ENCODE measurements at regions of chr11 and their contacts with region 1.

Region 1: GRCh38 chr11:78416305-78417178 is 1.1 kb downstream of the GAB2 start:
- DNase-seq: peak; percentile 71
- ATAC-seq: peak; percentile 51
- H3K4me3 Mint-ChIP-seq: peak overlapping the region; percentile 98
- H3K27ac Mint-ChIP-seq: peak overlapping the region; percentile 96
- H3K4me1 Mint-ChIP-seq: peaks cover 79% of the 10 kb centered on the region
- H3K27me3 Mint-ChIP-seq: no peaks in the 10 kb centered on the region
- CTCF ChIP-seq: no peak

Region 2: GRCh38 chr11:77994412-77995362 is 421.9 kb before region 1 on chr11 and contains the start of gene INTS4:
- CTCF ChIA-PET with region 1: no interaction called
- POLR2A ChIA-PET with region 1: interaction called, 4 read pairs
- intact Hi-C with region 1: loop called (anchors 2 kb)
- DNase-seq: peak; percentile 90
- ATAC-seq: peak; percentile 96
- H3K4me3 Mint-ChIP-seq: peak within 1 kb of the TSS; percentile 94
- H3K27ac Mint-ChIP-seq: peak within 1 kb of the TSS; percentile 97
- H3K4me1 Mint-ChIP-seq: peaks cover 45% of the 10 kb centered on the region
- H3K27me3 Mint-ChIP-seq: no peaks in the 10 kb centered on the region
- CTCF ChIP-seq: no peak
- total RNA-seq, gene INTS4: 61.8 and 62.3 TPM in 2 replicates

Region 3: GRCh38 chr11:78188286-78189173 is 228.0 kb before region 1 on chr11 and contains the starts of genes KCTD21 and USP35:
- CTCF ChIA-PET with region 1: no interaction called
- POLR2A ChIA-PET with region 1: interaction called, 11 read pairs
- intact Hi-C with region 1: loop called (anchors 2 kb)
- DNase-seq: peak; percentile 92
- ATAC-seq: peak; percentile 95
- H3K4me3 Mint-ChIP-seq: peak within 1 kb of the TSS; percentile 95
- H3K27ac Mint-ChIP-seq: peak within 1 kb of the TSS; percentile 87
- H3K4me1 Mint-ChIP-seq: peaks cover 36% of the 10 kb centered on the region
- H3K27me3 Mint-ChIP-seq: no peaks in the 10 kb centered on the region
- CTCF ChIP-seq: no peak
- total RNA-seq, gene KCTD21: 3.2 and 3.5 TPM in 2 replicates
- total RNA-seq, gene USP35: 3.5 and 4.9 TPM in 2 replicates

Region 4: DNA sequence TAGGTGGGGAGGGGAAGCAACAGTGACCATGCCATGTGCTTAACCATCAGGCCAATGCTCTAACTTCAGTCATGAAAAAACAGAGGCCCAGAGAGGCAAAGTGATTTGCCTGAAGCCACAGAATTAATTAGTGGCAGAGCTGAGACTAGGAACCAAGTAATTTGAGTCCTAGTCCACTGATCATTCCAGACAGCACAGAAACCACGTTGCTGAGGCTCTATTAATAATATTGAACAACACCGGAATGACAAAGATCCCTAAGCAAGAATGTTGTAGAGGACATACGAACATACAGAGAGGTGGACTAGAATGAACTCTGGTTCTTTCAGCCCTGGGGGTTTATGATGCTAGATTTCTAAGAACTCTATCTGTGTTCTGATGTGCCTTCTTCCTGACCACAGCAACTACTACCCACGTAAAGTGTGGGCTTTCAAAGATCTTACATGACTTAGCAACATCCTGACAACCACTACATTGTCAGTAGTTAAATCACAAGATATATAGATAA is 91.2 kb before region 1 on chr11:
- CTCF ChIA-PET with region 1: interaction called, 3 read pairs
- POLR2A ChIA-PET with region 1: interaction called, 14 read pairs
- intact Hi-C with region 1: no loop called
- DNase-seq: no peak
- ATAC-seq: peak; percentile 62
- H3K4me3 Mint-ChIP-seq: no peak overlapping the region
- H3K27ac Mint-ChIP-seq: peak overlapping the region; percentile 8
- H3K4me1 Mint-ChIP-seq: peaks cover 61% of the 10 kb centered on the region
- H3K27me3 Mint-ChIP-seq: no peaks in the 10 kb centered on the region
- CTCF ChIP-seq: no peak

Region 5: GRCh38 chr11:78453140-78453935 is 36.8 kb after region 1 on chr11:
- CTCF ChIA-PET with region 1: no interaction called
- POLR2A ChIA-PET with region 1: interaction called, 3 read pairs
- intact Hi-C with region 1: loop called (anchors 5 kb)
- DNase-seq: no peak
- ATAC-seq: no peak
- H3K4me3 Mint-ChIP-seq: no peak overlapping the region
- H3K27ac Mint-ChIP-seq: peak overlapping the region; percentile 73
- H3K4me1 Mint-ChIP-seq: peaks cover 38% of the 10 kb centered on the region
- H3K27me3 Mint-ChIP-seq: no peaks in the 10 kb centered on the region
- CTCF ChIP-seq: no peak

Region 6: GRCh38 chr11:78564490-78565467 is 148.2 kb after region 1 on chr11:
- CTCF ChIA-PET with region 1: interaction called, 39 read pairs
- POLR2A ChIA-PET with region 1: interaction called, 14 read pairs
- intact Hi-C with region 1: loop called (anchors 1 kb)
- DNase-seq: no peak
- ATAC-seq: peak; percentile 67
- H3K4me3 Mint-ChIP-seq: no peak overlapping the region
- H3K27ac Mint-ChIP-seq: no peak overlapping the region
- H3K4me1 Mint-ChIP-seq: peaks cover 37% of the 10 kb centered on the region
- H3K27me3 Mint-ChIP-seq: no peaks in the 10 kb centered on the region
- CTCF ChIP-seq: no peak

Region 7: GRCh38 chr11:78832226-78832947 is 415.8 kb after region 1 on chr11:
- CTCF ChIA-PET with region 1: no interaction called
- POLR2A ChIA-PET with region 1: no interaction called
- intact Hi-C with region 1: no loop called
- DNase-seq: no peak
- ATAC-seq: no peak
- H3K4me3 Mint-ChIP-seq: no peak overlapping the region
- H3K27ac Mint-ChIP-seq: no peak overlapping the region
- H3K4me1 Mint-ChIP-seq: no peaks in the 10 kb centered on the region
- H3K27me3 Mint-ChIP-seq: no peaks in the 10 kb centered on the region
- CTCF ChIP-seq: no peak

Measured in activated B cell treated with CpG ODN at 0.5 μM for 24 hours (primary cell).